ENCODE measurements at regions of chr17 and their contacts with region 1.

Region 1: GRCh38 chr17:46193626-46194392 is 580 bp upstream of the KANSL1 start:
- DNase-seq: peak; percentile 89 to 100 (median 98)
- H3K4me3 ChIP-seq: peak overlapping the region; percentile 70 to 95 (median 85)
- H3K27ac ChIP-seq: peak overlapping the region; percentile 93 to 100 (median 99)
- H3K27me3 ChIP-seq: no peaks in the 10 kb centered on the region
- CTCF ChIP-seq: peak in 53 of 56 donors; percentile 7 to 72 (median 46)

Region 2: GRCh38 chr17:45894022-45894784 is 299.6 kb before region 1 on chr17 and contains the start of gene MAPT:
- intact Hi-C with region 1: loop called in 1 of 2 experiments (anchors 5 kb)
- DNase-seq: peak; percentile 87 to 98 (median 92)
- H3K4me3 ChIP-seq: peak within 1 kb of the TSS; percentile 64 to 99 (median 95)
- H3K27ac ChIP-seq: peak within 1 kb of the TSS; percentile 78 to 100 (median 97)
- H3K27me3 ChIP-seq: peaks cover 0 to 5% (median 0%) of the 10 kb centered on the region in 45 donors
- CTCF ChIP-seq: peak; percentile 68 to 100 (median 94)
- total RNA-seq, gene MAPT: 323 to 524 (median 437) TPM

Region 3: GRCh38 chr17:46002311-46002972 is 191.4 kb before region 1 on chr17:
- intact Hi-C with region 1: loop called (anchors 5 kb)
- DNase-seq: peak in 9 of 10 donors; percentile 49 to 85 (median 71)
- H3K4me3 ChIP-seq: peak overlapping the region in 1 of 59 donors; percentile 1
- H3K27ac ChIP-seq: peak overlapping the region in 53 of 59 donors; percentile 2 to 90 (median 69)
- H3K27me3 ChIP-seq: no peaks in the 10 kb centered on the region
- CTCF ChIP-seq: peak; percentile 92 to 100 (median 97)

Region 4: GRCh38 chr17:46026166-46027047 is 167.4 kb before region 1 on chr17:
- intact Hi-C with region 1: loop called in 1 of 2 experiments (anchors 5 kb)
- DNase-seq: no peak
- H3K4me3 ChIP-seq: no peak overlapping the region
- H3K27ac ChIP-seq: peak overlapping the region in 53 of 59 donors; percentile 22 to 82 (median 66)
- H3K27me3 ChIP-seq: no peaks in the 10 kb centered on the region
- CTCF ChIP-seq: no peak

Region 5: DNA sequence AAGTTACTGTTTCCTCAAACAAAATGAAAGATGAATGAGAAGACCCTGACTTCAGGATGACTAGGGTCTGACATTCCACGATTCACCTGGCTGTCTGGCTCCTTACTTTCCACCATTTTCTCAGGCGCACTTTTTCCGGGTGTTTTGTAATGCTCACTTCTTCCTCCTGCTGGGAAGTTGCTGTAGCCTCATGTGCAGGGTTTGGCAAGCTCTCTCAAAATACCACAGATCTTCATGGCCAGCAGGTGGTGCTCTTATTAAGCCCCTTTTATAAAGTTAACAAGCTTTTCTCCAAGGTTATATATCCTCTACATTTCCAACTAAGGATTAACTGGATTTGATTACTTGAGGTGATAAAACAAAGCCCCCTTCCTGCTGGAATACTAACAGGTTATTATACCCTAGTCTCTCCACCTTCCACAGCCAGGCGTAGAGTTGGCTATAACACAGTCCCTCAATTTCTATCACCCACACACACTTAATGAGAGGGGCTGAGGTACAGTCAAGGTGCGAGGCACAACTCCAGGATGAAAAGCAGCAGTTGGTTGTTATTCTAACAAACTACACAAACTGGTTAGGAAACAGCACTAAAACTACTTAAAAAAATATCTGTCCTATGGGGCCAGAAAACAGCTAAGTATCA is 149.4 kb before region 1 on chr17:
- intact Hi-C with region 1: loop called in 1 of 2 experiments (anchors 1 kb)
- DNase-seq: peak in 6 of 10 donors; percentile 59 to 86 (median 61)
- H3K4me3 ChIP-seq: peak overlapping the region in 5 of 59 donors; percentile 1 to 12 (median 8)
- H3K27ac ChIP-seq: peak overlapping the region in 46 of 59 donors; percentile 1 to 81 (median 49)
- H3K27me3 ChIP-seq: no peaks in the 10 kb centered on the region
- CTCF ChIP-seq: peak; percentile 57 to 96 (median 88)

Region 6: GRCh38 chr17:46212634-46213435 is 19.0 kb after region 1 on chr17:
- intact Hi-C with region 1: loop called in 1 of 2 experiments (anchors 2 kb)
- DNase-seq: peak in 4 of 10 donors; percentile 56 to 84 (median 66)
- H3K4me3 ChIP-seq: peak overlapping the region in 2 of 59 donors; percentile 5 to 7
- H3K27ac ChIP-seq: peak overlapping the region in 16 of 59 donors; percentile 0 to 57 (median 22)
- H3K27me3 ChIP-seq: no peaks in the 10 kb centered on the region
- CTCF ChIP-seq: peak in 55 of 56 donors; percentile 63 to 99 (median 90)

Region 7: GRCh38 chr17:46266656-46267544 is 73.1 kb after region 1 on chr17:
- intact Hi-C with region 1: loop called in 1 of 2 experiments (anchors 5 kb)
- DNase-seq: peak; percentile 56 to 89 (median 83)
- H3K4me3 ChIP-seq: peak overlapping the region; percentile 51 to 95 (median 81)
- H3K27ac ChIP-seq: peak overlapping the region; percentile 61 to 98 (median 91)
- H3K27me3 ChIP-seq: no peaks in the 10 kb centered on the region
- CTCF ChIP-seq: peak in 15 of 56 donors; percentile 4 to 53 (median 17)

Measured in dorsolateral prefrontal cortex (tissue), 120 donors.